Mammary epithelial cell (primary cell): ENCODE measurements at regions of chr1 and their contacts with region 1.

Region 1: GRCh38 chr1:42765832-42766740 is 742 bp downstream of the P3H1 start:
- DNase-seq: peak; percentile 60
- H3K4me3 ChIP-seq: peak overlapping the region; percentile 54 to 89 (median 83)
- H3K27ac ChIP-seq: peak overlapping the region; percentile 8
- H3K4me1 ChIP-seq: peaks cover 15% of the 10 kb centered on the region
- H3K27me3 ChIP-seq: no peaks in the 10 kb centered on the region
- CTCF ChIP-seq: peak; percentile 35 to 57

Region 2: DNA sequence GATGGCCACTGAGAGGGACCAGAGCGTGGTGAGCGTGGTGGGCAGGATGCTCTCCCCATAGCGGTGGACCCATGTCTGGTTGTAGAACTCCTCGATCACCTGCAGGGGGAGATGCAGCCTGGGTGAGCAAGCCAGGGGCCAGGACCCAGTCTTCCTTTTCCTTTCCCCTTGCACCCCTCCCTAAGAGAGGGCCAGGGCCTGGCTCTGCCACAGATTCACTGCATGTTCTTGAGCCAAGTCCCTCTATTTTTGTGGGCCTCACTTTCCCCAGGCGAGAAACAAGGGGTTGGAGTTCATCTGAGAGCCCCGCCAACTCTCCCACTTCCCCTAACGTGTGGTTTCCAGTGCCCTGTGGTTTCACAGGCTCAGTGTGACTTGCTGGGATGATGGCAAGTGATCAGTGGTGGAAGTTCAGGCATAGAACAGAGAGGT is 165.0 kb after region 1 on chr1:
- CTCF ChIA-PET with region 1: interaction called, 15 read pairs
- dilution Hi-C with region 1: no loop called
- in situ Hi-C with region 1: loop called in 1 of 2 experiments (anchors 10 kb)
- intact Hi-C with region 1: no loop called
- DNase-seq: peak; percentile 27
- H3K4me3 ChIP-seq: no peak overlapping the region
- H3K27ac ChIP-seq: no peak overlapping the region
- H3K4me1 ChIP-seq: peaks cover 54% of the 10 kb centered on the region
- H3K27me3 ChIP-seq: no peaks in the 10 kb centered on the region
- CTCF ChIP-seq: peak; percentile 39 to 64